Tibial artery (tissue), 4 donors: ENCODE measurements at regions of chr3 and their contacts with region 1.

Region 1: DNA sequence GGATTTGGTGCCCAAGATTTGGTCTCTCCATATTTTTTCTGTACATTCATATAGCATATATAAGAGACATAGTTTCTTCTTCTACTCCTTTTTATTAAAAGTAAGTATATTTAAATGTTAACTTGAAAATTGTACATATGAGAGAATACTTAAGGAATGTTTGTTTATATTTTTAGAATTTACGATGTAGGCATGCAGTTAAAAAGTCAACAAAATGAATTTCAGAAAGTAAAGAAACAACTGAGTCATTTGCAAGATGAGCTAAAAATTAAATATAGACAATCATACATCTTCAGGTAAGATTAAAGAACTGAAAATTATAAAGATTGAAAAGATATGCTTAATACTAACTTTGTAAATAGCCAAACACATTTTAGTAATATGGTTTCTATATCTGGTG is 94.2 kb downstream of the LEKR1 start:
- DNase-seq: no peak
- H3K4me3 ChIP-seq: no peak overlapping the region
- H3K27ac ChIP-seq: no peak overlapping the region
- H3K4me1 ChIP-seq: no peaks in the 10 kb centered on the region
- H3K27me3 ChIP-seq: no peaks in the 10 kb centered on the region
- CTCF ChIP-seq: no peak

Region 2: GRCh38 chr3:155744626-155745324 is 1175.6 kb before region 1 on chr3 and contains the start of gene PLCH1:
- intact Hi-C with region 1: loop called (anchors 5 kb)
- DNase-seq: peak; percentile 68 to 77
- H3K4me3 ChIP-seq: peak within 1 kb of the TSS; percentile 55 to 60
- H3K27ac ChIP-seq: peak within 1 kb of the TSS; percentile 15 to 17
- H3K4me1 ChIP-seq: peaks cover 0 to 29% (median 11%) of the 10 kb centered on the region in 4 donors
- H3K27me3 ChIP-seq: peaks cover 0 to 16% of the 10 kb centered on the region in 2 donors
- CTCF ChIP-seq: no peak

Region 3: GRCh38 chr3:156865732-156866131 is 54.7 kb before region 1 on chr3:
- intact Hi-C with region 1: no loop called
- DNase-seq: no peak
- H3K4me3 ChIP-seq: no peak overlapping the region
- H3K27ac ChIP-seq: no peak overlapping the region
- H3K4me1 ChIP-seq: no peaks in the 10 kb centered on the region
- H3K27me3 ChIP-seq: no peaks in the 10 kb centered on the region
- CTCF ChIP-seq: no peak